ENCODE measurements at regions of chr1 and their contacts with region 1.

Region 1: DNA sequence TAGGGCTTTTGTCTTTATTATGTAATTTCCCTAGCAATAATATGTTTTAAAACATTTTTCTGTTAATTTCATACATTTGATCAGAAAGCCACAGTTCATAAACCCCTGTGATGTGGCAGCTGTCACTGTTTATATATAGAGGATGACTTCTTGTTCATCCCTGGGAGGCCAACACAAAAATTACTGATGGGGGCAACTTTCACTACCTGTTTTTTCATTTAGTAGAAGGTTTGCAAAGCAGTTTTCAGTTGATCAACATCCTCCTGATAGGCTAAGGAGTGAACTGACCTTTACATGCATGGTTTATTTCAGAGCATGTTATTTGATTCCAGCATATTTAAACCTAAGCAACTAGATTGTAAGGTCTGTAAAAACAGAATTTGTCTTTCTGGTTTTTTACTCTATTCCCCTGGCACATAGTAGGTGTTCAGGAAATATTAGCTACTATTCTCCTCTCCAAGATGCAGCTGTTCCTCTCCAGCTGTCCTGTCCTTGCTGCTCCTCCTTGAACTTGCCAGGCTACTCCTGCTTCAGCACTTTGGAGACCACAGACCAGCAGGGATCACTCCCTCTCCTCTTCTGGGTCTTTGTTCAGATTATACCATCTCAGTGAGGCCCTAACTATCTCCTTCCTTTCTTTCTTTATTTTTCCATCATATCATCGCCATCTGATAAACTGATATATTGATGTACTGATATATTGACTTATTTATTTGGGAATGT is 54.7 kb downstream of the ROR1 start:
- DNase-seq: no peak
- H3K4me3 ChIP-seq: no peak overlapping the region
- H3K27ac ChIP-seq: peak overlapping the region; percentile 20 to 80
- H3K4me1 ChIP-seq: peaks cover 0 to 47% of the 10 kb centered on the region in 2 donors
- H3K27me3 ChIP-seq: no peaks in the 10 kb centered on the region
- CTCF ChIP-seq: no peak

Region 2: GRCh38 chr1:63874278-63874880 is 45.9 kb after region 1 on chr1:
- intact Hi-C with region 1: loop called (anchors 5 kb)
- DNase-seq: no peak
- H3K4me3 ChIP-seq: no peak overlapping the region
- H3K27ac ChIP-seq: peak overlapping the region; percentile 12 to 57
- H3K4me1 ChIP-seq: peaks cover 5 to 54% of the 10 kb centered on the region in 2 donors
- H3K27me3 ChIP-seq: no peaks in the 10 kb centered on the region
- CTCF ChIP-seq: no peak

Region 3: DNA sequence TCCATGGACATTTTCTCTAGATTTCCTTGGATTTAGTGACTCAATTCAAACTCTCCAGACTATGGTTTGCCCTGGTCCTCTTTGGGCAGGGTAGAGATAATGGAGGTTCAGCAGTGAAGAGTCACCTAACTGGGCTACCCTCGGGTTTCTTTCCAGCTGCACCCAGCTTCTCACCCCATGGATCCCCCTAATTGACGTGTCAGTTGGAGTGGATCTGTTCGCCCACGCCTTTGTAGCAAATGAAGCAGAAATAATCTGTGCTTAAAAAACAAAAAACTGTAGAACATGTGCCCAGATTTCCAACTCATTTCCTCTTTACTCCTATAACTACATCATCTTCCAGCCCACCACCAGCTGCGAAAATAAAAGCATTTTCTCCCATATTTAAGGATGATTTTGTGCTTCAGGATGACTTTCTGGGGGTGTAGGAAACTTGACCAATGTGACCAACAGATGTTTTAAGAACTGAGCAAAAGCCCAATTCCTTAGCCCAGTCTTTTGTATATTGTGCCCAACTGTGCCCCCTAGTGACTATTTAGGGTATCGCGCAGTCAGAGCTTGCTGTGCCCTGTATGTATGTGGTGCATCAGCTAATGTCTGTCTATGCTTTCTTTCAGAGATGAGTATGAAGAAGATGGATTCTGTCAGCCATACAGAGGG is 308.4 kb after region 1 on chr1:
- intact Hi-C with region 1: loop called (anchors 5 kb)
- DNase-seq: peak; percentile 23 to 90
- H3K4me3 ChIP-seq: no peak overlapping the region
- H3K27ac ChIP-seq: peak overlapping the region; percentile 37 to 64
- H3K4me1 ChIP-seq: peaks cover 4 to 42% of the 10 kb centered on the region in 2 donors
- H3K27me3 ChIP-seq: no peaks in the 10 kb centered on the region
- CTCF ChIP-seq: peak; percentile 83 to 90 (median 88)